ENCODE measurements at regions of chr20 and their contacts with region 1.

Region 1: GRCh38 chr20:58481481-58482021 is 33.6 kb downstream of the APCDD1L start:
- DNase-seq: peak; percentile 36 to 96
- H3K4me3 ChIP-seq: peak overlapping the region in 1 of 4 experiments; percentile 30; a peak in 1 of 8 replicates
- H3K27ac ChIP-seq: no peak overlapping the region
- H3K4me1 ChIP-seq: peaks cover 0 to 4% (median 3%) of the 10 kb centered on the region in 4 experiments; a peak in 5 of 7 replicates
- H3K27me3 ChIP-seq: no peaks in the 10 kb centered on the region; a peak in 1 of 7 replicates
- CTCF ChIP-seq: peak; percentile 75 to 86 (median 83)
- EP300 ChIP-seq: no peak
- POLR2A ChIP-seq: no peak
- RAD21 ChIP-seq: peak; percentile 97 to 98

Region 2: GRCh38 chr20:58471193-58472164 is 10.1 kb before region 1 on chr20:
- CTCF ChIA-PET with region 1: interaction called, 10 read pairs
- POLR2A ChIA-PET with region 1: interaction called, 4 read pairs
- DNase-seq: peak in 1 of 2 experiments; percentile 44
- H3K4me3 ChIP-seq: no peak overlapping the region
- H3K27ac ChIP-seq: no peak overlapping the region
- H3K4me1 ChIP-seq: peaks cover 0 to 8% (median 4%) of the 10 kb centered on the region in 4 experiments; a peak in 5 of 7 replicates
- H3K27me3 ChIP-seq: no peaks in the 10 kb centered on the region
- CTCF ChIP-seq: peak in 1 of 3 experiments; percentile 21; a peak in 1 of 4 replicates
- EP300 ChIP-seq: no peak
- POLR2A ChIP-seq: no peak
- RAD21 ChIP-seq: 0 out of 4 replicates have a peak, but pooled peaks of 1 of the 2 experiments have one; percentile 10

Region 3: GRCh38 chr20:58515233-58516184 is 34.0 kb after region 1 on chr20 and contains the start of gene APCDD1L:
- CTCF ChIA-PET with region 1: interaction called, 27 read pairs
- POLR2A ChIA-PET with region 1: interaction called, 7 read pairs
- DNase-seq: peak in 1 of 2 experiments; percentile 25
- H3K4me3 ChIP-seq: peak within 1 kb of the TSS; percentile 43 to 69 (median 56)
- H3K27ac ChIP-seq: no peak within 1 kb of the TSS
- H3K4me1 ChIP-seq: peaks cover 3 to 15% (median 8%) of the 10 kb centered on the region in 4 experiments
- H3K27me3 ChIP-seq: peaks cover 9 to 42% (median 37%) of the 10 kb centered on the region in 4 experiments
- CTCF ChIP-seq: no peak
- EP300 ChIP-seq: no peak
- POLR2A ChIP-seq: no peak
- RAD21 ChIP-seq: no peak; a peak in 1 of 4 replicates
- total RNA-seq, gene APCDD1L: 3.1 and 3.2 TPM in 2 replicates

Region 4: DNA sequence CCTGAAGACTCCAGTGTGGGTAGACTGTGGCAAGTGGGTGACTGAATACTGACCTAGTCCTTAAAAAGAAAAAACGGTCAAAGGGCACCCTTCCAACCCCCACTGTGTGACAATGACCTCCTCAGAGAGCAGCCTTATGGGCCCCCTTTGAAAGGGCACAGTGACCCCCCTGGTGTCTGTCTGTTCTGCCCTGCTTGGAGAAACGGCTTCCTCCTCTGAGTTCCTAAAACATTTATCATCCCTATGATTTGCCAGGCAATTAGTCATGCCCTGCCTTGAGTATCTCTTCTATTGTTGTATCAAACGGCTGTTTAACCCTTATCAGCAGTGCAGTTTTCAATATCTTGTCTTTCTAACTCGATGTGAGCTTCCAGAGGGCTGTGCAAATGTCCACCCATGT is 148.5 kb after region 1 on chr20:
- CTCF ChIA-PET with region 1: interaction called, 21 read pairs
- POLR2A ChIA-PET with region 1: no interaction called
- DNase-seq: no peak
- H3K4me3 ChIP-seq: no peak overlapping the region
- H3K27ac ChIP-seq: no peak overlapping the region
- H3K4me1 ChIP-seq: peaks cover 0 to 2% (median 0%) of the 10 kb centered on the region in 4 experiments; a peak in 1 of 7 replicates
- H3K27me3 ChIP-seq: 0 out of 7 replicates have a peak, but pooled peaks cover 0 to 2% (median 0%) of the 10 kb centered on the region in 4 experiments
- CTCF ChIP-seq: no peak
- EP300 ChIP-seq: no peak
- POLR2A ChIP-seq: no peak
- RAD21 ChIP-seq: no peak

Region 5: GRCh38 chr20:58850693-58851174 is 369.2 kb after region 1 on chr20 and contains the start of gene GNAS-AS1:
- CTCF ChIA-PET with region 1: interaction called, 21 read pairs
- POLR2A ChIA-PET with region 1: interaction called, 4 read pairs
- DNase-seq: peak; percentile 76 to 96
- H3K4me3 ChIP-seq: peak within 1 kb of the TSS; percentile 68 to 88 (median 78)
- H3K27ac ChIP-seq: peak within 1 kb of the TSS; percentile 87
- H3K4me1 ChIP-seq: peaks cover 0 to 32% (median 15%) of the 10 kb centered on the region in 4 experiments; a peak in 6 of 7 replicates
- H3K27me3 ChIP-seq: peaks cover 16 to 47% (median 41%) of the 10 kb centered on the region in 4 experiments
- CTCF ChIP-seq: peak in 2 of 3 experiments; percentile 9 to 11; a peak in 2 of 4 replicates
- EP300 ChIP-seq: no peak
- POLR2A ChIP-seq: no peak; a peak in 1 of 3 replicates
- RAD21 ChIP-seq: no peak
- total RNA-seq, gene GNAS-AS1: 11.7 and 13.7 TPM in 2 replicates

Measured in H1 (cell line).